MCF 10A (cell line): ENCODE measurements at regions of chr2 and their contacts with region 1.

Region 1: GRCh38 chr2:238263204-238264071 is 23.6 kb upstream of the HES6 start:
- DNase-seq: peak; percentile 86
- H3K4me3 Mint-ChIP-seq: no peak overlapping the region
- H3K27ac Mint-ChIP-seq: peak overlapping the region; percentile 49
- H3K4me1 Mint-ChIP-seq: peaks cover 20% of the 10 kb centered on the region
- H3K27me3 Mint-ChIP-seq: no peaks in the 10 kb centered on the region
- CTCF ChIP-seq: peak; percentile 70

Region 2: DNA sequence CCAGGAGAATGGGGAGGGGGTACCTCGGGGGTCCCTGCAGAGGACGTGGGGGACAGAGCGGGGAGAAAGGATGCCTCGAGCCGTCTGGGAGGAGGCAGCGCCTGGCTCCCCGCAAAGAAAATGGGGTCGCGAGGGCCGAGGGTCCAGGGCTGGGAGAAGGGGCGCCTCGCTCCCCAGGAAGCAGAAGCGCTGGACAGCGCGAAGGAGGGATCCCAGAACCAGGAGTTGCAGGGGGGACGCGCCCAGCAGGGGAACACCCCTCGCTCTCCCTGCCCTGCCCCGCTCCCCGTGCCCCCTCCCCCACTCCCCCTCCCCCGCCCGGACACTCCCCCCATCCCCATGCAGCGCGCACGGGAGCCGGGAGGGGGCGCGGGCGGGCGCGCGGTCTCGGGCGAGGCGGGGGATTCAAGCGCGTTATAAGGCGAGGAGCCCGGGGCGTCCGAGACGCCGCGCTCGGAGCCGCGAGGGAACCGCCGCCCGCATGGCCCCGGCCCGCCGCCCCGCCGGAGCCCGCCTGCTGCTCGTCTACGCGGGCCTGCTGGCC is 104.8 kb before region 1 on chr2 and contains the start of gene ERFE:
- CTCF ChIA-PET with region 1: no interaction called
- POLR2A ChIA-PET with region 1: no interaction called
- intact Hi-C with region 1: loop called (anchors 1 kb)
- DNase-seq: peak; percentile 58
- H3K4me3 Mint-ChIP-seq: peak within 1 kb of the TSS; percentile 62
- H3K27ac Mint-ChIP-seq: no peak within 1 kb of the TSS
- H3K4me1 Mint-ChIP-seq: peaks cover 5% of the 10 kb centered on the region
- H3K27me3 Mint-ChIP-seq: no peaks in the 10 kb centered on the region
- CTCF ChIP-seq: peak; percentile 67
- total RNA-seq, gene ERFE: 14.5 and 18.1 TPM in 2 replicates

Region 3: GRCh38 chr2:238247841-238248443 is 15.5 kb before region 1 on chr2:
- CTCF ChIA-PET with region 1: interaction called, 10 read pairs
- POLR2A ChIA-PET with region 1: interaction called, 3 read pairs
- intact Hi-C with region 1: no loop called
- DNase-seq: no peak
- H3K4me3 Mint-ChIP-seq: no peak overlapping the region
- H3K27ac Mint-ChIP-seq: no peak overlapping the region
- H3K4me1 Mint-ChIP-seq: peaks cover 13% of the 10 kb centered on the region
- H3K27me3 Mint-ChIP-seq: no peaks in the 10 kb centered on the region
- CTCF ChIP-seq: no peak

Region 4: GRCh38 chr2:238305092-238305862 is 41.8 kb after region 1 on chr2:
- CTCF ChIA-PET with region 1: interaction called, 10 read pairs
- POLR2A ChIA-PET with region 1: interaction called, 3 read pairs
- intact Hi-C with region 1: no loop called
- DNase-seq: peak; percentile 48
- H3K4me3 Mint-ChIP-seq: no peak overlapping the region
- H3K27ac Mint-ChIP-seq: peak overlapping the region; percentile 5
- H3K4me1 Mint-ChIP-seq: no peaks in the 10 kb centered on the region
- H3K27me3 Mint-ChIP-seq: no peaks in the 10 kb centered on the region
- CTCF ChIP-seq: peak; percentile 42